ENCODE measurements at regions of chr17 and their contacts with region 1.

Region 1: GRCh38 chr17:39244600-39245570 is 19.1 kb upstream of the STAC2 start:
- DNase-seq: peak; percentile 67

Region 2: DNA sequence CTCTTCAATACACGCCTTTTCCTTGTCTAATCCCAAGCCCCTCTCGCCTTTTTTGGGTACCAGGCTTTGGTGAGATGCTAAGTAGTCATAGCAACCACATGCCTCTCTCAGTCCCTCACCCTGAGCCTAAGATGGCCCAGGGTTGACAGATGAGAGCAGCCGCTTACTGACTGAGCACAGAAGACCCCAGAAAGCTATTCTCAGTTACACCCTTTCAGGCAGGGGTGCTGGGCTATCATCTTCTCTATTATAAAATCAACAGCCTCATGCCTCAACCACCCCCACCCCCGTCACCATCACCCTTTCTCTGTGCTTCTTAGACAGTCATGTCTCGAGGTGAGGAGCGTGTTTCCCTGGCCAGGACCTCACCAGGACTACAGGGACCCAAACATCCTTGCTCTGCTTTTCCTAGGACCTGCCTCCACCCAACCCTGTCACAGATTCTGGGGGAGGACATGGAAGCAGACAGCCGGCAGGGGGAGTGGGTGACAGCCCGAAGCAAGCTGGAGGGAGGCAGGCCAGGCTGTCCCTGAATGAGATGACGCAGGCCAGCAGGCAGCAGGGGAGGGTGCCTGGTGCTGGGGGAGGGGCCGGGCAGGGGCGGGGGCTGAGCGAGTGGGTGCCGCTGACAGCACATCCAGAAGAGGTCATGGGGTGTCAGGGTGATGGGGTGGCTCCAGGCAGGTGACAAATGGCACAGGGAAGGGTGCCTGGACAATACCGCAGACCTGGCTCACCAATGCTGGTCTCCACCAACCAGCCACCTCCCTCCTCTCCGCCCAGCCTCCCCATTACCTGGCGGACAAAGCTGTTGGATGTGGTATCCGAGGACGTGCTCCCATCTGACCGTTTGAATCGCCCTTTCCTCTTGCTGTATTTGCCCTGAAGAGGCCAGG is 50.5 kb before region 1 on chr17:
- CTCF ChIA-PET with region 1: interaction called, 10 read pairs
- POLR2A ChIA-PET with region 1: interaction called, 32 read pairs
- DNase-seq: peak; percentile 67

Region 3: DNA sequence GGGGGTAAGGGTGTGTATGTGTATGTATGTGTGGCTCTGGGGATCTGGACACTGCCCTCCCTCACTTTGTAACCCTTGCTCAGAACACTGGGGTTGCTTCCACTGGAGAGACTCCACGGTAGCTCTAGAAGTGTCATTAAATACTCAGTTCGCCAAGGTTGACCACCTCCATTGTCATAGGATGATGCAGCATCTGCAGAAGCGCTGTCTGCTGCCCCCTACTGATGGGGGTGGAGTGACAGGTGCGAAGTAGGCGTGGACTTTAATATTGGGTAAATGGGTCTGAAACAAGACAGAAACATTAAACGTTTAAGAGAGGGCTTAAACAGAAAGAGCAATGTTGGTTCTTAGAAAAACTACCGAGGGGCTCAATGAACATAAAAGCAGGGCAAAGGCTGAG is 16.4 kb after region 1 on chr17:
- CTCF ChIA-PET with region 1: interaction called, 11 read pairs
- POLR2A ChIA-PET with region 1: no interaction called
- DNase-seq: no peak

Region 4: DNA sequence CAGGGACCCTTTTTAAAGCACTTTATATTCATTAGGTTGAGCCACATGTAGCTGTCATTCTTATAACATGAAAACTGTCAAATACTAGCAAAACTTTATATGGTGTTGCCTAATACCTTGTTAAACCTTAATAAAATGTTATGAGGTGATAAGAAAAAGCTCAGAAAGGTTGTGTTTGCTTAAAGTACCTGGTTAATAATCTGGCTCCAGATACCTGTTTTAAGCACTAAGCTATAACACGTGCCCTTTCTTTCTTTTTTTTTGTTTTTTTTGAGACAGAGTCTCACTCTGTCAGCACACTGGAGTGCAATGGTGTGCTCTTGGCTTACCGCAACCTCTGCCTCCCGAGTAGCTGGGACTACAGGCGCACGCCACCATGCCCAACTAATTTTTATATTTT is 39.8 kb after region 1 on chr17:
- CTCF ChIA-PET with region 1: no interaction called
- POLR2A ChIA-PET with region 1: no interaction called
- DNase-seq: no peak

Region 5: GRCh38 chr17:39339272-39339671 is 94.4 kb after region 1 on chr17:
- CTCF ChIA-PET with region 1: no interaction called
- POLR2A ChIA-PET with region 1: no interaction called
- DNase-seq: no peak

Region 6: GRCh38 chr17:39365242-39365641 is 120.4 kb after region 1 on chr17:
- CTCF ChIA-PET with region 1: no interaction called
- POLR2A ChIA-PET with region 1: no interaction called
- DNase-seq: no peak

Measured in HEK293T (cell line).